ENCODE measurements at regions of chr14 and their contacts with region 1.

Region 1: GRCh38 chr14:54566410-54567223 is at the start of gene SAMD4A:
- DNase-seq: peak; percentile 84
- ATAC-seq: peak; percentile 48 to 62
- total RNA-seq, gene SAMD4A: 103 to 118 TPM

Region 2: GRCh38 chr14:54638135-54638446 is 71.5 kb after region 1 on chr14:
- intact Hi-C with region 1: no loop called
- DNase-seq: no peak
- ATAC-seq: no peak

Region 3: DNA sequence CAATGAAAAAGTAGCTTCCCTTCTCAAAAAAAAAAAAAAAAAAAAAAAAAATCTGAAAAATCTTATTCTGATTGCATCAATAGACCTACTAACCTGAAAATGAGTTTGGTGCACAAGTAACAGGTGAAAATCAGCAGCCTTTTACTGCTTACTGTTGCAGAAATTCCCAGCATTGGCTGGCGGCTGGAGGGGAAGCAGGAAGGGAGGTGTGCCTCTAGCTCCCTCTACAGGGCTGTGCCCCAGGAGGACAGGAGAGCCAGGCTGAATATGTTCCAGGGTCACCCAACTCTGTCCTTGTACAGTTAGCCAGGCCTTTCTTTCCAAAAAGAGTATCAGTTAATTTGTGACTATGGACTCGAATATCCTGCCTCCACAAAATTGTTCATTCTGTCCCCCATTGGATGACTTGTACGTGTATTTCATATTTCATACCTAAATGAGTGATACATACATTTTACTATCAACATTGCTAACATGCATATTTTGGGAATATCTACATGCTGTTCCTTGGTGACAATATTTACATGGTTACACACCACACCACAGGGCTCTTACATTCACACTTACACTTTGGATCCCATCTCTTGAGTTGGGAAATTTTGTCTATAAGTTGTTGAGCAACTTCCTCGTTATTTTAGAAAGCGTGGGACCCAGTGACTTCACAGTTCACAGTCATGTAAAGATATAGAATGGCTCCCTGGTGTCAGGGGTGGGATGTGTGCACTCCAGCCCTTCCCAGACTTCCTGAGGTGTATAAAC is 125.1 kb after region 1 on chr14:
- intact Hi-C with region 1: loop called (anchors 2 kb)
- DNase-seq: peak; percentile 84
- ATAC-seq: peak; percentile 76 to 84

Region 4: GRCh38 chr14:54773171-54773975 is 206.8 kb after region 1 on chr14:
- intact Hi-C with region 1: loop called (anchors 1 to 5 kb)
- DNase-seq: peak; percentile 92
- ATAC-seq: peak; percentile 84 to 91

Region 5: GRCh38 chr14:54805521-54806322 is 239.1 kb after region 1 on chr14:
- intact Hi-C with region 1: loop called in 1 of 2 experiments (anchors 2 kb)
- DNase-seq: peak; percentile 89
- ATAC-seq: peak; percentile 88 to 94

Region 6: DNA sequence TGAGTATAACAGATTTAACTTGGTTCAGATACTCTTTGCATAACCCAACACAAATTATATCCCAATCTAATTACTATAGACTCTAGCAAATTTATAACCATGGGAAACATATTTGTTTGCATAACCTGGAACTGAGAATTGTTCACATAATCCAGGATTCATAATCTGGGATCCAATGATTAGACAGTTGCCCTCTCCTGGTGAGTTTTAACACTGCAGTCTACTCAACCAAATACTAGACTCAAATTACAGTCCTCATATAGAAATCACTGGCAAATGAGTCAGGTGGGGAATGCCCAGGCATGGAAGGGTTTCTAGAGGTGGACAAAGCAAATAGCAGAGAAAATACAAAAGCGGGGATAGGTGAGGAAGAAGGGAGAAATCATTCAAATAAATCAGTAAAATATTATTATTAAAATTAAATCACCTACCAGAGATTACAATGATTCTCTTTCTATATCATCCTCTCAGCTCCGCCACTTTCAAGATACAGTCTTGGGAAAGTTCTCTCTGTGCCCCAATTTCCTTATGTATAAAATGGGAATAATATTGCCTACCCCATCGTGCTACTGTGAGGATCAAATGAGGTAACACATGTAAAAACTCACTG is 326.6 kb after region 1 on chr14:
- intact Hi-C with region 1: loop called in 1 of 2 experiments (anchors 5 kb)
- DNase-seq: no peak
- ATAC-seq: peak; percentile 53 to 60

Measured in left cardiac atrium (tissue), 4 donors.